PC-3 (cell line): ENCODE measurements at regions of chr17 and their contacts with region 1.

Region 1: GRCh38 chr17:48618256-48618897 is 3.3 kb upstream of the HOXB8 start:
- DNase-seq: peak; percentile 97
- ATAC-seq: peak; percentile 66
- H3K4me3 ChIP-seq: peak overlapping the region; percentile 80
- H3K27ac ChIP-seq: no peak overlapping the region
- H3K4me1 ChIP-seq: peaks cover 29% of the 10 kb centered on the region
- H3K27me3 ChIP-seq: peaks cover 60% of the 10 kb centered on the region
- CTCF ChIP-seq: peak; percentile 98

Region 2: GRCh38 chr17:47915776-47916398 is 702.5 kb before region 1 on chr17:
- CTCF ChIA-PET with region 1: no interaction called
- POLR2A ChIA-PET with region 1: no interaction called
- intact Hi-C with region 1: no loop called
- DNase-seq: no peak
- ATAC-seq: no peak
- H3K4me3 ChIP-seq: no peak overlapping the region
- H3K27ac ChIP-seq: no peak overlapping the region
- H3K4me1 ChIP-seq: no peaks in the 10 kb centered on the region
- H3K27me3 ChIP-seq: no peaks in the 10 kb centered on the region
- CTCF ChIP-seq: no peak

Region 3: GRCh38 chr17:47993964-47994363 is 624.4 kb before region 1 on chr17:
- CTCF ChIA-PET with region 1: no interaction called
- POLR2A ChIA-PET with region 1: interaction called, 12 read pairs
- intact Hi-C with region 1: no loop called
- DNase-seq: no peak
- ATAC-seq: no peak
- H3K4me3 ChIP-seq: no peak overlapping the region
- H3K27ac ChIP-seq: no peak overlapping the region
- H3K4me1 ChIP-seq: peaks cover under 1% of the 10 kb centered on the region; the same call in 1 of the 2 replicates
- H3K27me3 ChIP-seq: no peaks in the 10 kb centered on the region
- CTCF ChIP-seq: no peak

Region 4: GRCh38 chr17:48307814-48308411 is 310.5 kb before region 1 on chr17:
- CTCF ChIA-PET with region 1: interaction called, 6 read pairs
- POLR2A ChIA-PET with region 1: no interaction called
- intact Hi-C with region 1: loop called (anchors 1 kb)
- DNase-seq: peak; percentile 84
- ATAC-seq: peak; percentile 98
- H3K4me3 ChIP-seq: no peak overlapping the region
- H3K27ac ChIP-seq: no peak overlapping the region
- H3K4me1 ChIP-seq: no peaks in the 10 kb centered on the region
- H3K27me3 ChIP-seq: peaks cover 39% of the 10 kb centered on the region
- CTCF ChIP-seq: peak; percentile 98

Region 5: GRCh38 chr17:48335858-48336500 is 282.4 kb before region 1 on chr17:
- CTCF ChIA-PET with region 1: interaction called, 8 read pairs
- POLR2A ChIA-PET with region 1: no interaction called
- intact Hi-C with region 1: loop called (anchors 1 kb)
- DNase-seq: peak; percentile 96
- ATAC-seq: peak; percentile 64
- H3K4me3 ChIP-seq: no peak overlapping the region
- H3K27ac ChIP-seq: no peak overlapping the region
- H3K4me1 ChIP-seq: peaks cover 13% of the 10 kb centered on the region
- H3K27me3 ChIP-seq: no peaks in the 10 kb centered on the region; the same call in 1 of the 2 replicates
- CTCF ChIP-seq: peak; percentile 93

Region 6: DNA sequence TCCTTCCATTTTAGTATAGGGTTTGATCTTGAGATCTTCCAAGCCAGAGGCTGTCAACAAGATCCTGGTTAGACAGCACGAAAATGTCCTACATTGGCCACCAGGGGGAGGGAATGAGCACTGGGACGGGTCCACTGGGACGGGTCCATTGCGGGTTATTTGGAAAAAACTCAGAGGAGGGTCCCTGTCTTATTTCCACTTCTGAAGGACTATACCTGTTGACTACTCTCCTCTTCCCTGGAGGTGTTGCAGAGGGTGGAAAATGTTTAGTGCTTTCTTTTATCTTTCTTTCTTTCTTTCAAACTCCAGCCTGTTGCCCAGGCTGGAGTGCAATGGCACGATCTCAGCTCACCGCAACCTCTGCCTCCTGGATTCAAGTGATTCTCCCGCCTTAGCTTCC is 196.1 kb after region 1 on chr17:
- CTCF ChIA-PET with region 1: no interaction called
- POLR2A ChIA-PET with region 1: no interaction called
- intact Hi-C with region 1: no loop called
- DNase-seq: peak; percentile 85
- ATAC-seq: peak; percentile 11; the same call in 1 of the 2 replicates
- H3K4me3 ChIP-seq: no peak overlapping the region
- H3K27ac ChIP-seq: no peak overlapping the region
- H3K4me1 ChIP-seq: peaks cover 12% of the 10 kb centered on the region
- H3K27me3 ChIP-seq: no peaks in the 10 kb centered on the region
- CTCF ChIP-seq: peak; percentile 93